Naive thymus-derived CD8-positive, alpha-beta T cell (primary cell): ENCODE measurements at regions of chr6 and their contacts with region 1.

Region 1: DNA sequence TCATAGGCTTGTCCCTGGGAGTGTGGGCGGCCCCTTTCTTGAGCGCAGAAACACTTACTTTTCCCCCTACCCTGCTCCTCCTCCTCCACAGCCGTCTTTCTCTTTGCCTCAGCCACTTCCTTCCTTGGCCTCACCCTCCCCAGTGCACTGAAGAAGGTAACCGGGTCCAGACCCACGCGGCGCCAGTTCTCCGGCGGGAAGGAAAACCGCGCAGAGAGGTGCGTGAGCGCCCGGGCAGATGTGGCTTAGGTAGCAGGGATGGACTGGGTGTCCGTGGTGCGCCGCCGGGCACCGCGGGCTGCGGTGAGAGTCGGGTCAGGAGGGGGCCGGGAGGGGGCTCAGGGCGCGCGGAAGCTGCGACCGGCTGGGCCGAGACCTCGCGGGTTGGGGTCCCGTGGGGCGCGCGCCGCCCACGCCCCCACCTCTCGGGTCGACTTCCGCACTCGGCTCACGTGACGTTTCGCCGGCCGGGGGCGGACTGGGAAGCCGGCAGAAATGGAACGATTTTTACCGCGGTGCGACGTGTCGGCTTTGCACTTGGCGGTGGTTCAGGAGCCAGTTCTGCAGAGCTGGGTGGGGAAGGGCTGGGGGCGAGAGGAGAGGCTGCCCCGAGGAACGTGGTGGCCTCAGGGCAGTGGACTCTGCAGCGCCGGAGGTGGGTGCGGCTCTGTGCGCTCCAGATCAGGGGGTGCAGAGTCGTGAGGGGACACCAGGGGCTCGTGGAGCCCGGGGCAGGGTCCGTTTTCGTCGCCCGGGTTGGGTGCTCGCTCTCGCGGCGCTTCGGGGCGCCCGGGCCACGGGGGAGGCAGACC is at the start of gene ABRACL:
- DNase-seq: peak; percentile 54 to 88 (median 74)
- ATAC-seq: peak; percentile 83 to 89
- H3K4me3 Mint-ChIP-seq: peak within 1 kb of the TSS in 7 of 10 donors; percentile 87 to 97 (median 93)
- H3K27ac Mint-ChIP-seq: peak within 1 kb of the TSS; percentile 88 to 97 (median 96)
- H3K4me1 Mint-ChIP-seq: peaks cover 16 to 33% (median 20%) of the 10 kb centered on the region in 4 donors
- H3K27me3 Mint-ChIP-seq: no peaks in the 10 kb centered on the region
- polyA plus RNA-seq, gene ABRACL: 210 to 228 (median 217) TPM

Region 2: DNA sequence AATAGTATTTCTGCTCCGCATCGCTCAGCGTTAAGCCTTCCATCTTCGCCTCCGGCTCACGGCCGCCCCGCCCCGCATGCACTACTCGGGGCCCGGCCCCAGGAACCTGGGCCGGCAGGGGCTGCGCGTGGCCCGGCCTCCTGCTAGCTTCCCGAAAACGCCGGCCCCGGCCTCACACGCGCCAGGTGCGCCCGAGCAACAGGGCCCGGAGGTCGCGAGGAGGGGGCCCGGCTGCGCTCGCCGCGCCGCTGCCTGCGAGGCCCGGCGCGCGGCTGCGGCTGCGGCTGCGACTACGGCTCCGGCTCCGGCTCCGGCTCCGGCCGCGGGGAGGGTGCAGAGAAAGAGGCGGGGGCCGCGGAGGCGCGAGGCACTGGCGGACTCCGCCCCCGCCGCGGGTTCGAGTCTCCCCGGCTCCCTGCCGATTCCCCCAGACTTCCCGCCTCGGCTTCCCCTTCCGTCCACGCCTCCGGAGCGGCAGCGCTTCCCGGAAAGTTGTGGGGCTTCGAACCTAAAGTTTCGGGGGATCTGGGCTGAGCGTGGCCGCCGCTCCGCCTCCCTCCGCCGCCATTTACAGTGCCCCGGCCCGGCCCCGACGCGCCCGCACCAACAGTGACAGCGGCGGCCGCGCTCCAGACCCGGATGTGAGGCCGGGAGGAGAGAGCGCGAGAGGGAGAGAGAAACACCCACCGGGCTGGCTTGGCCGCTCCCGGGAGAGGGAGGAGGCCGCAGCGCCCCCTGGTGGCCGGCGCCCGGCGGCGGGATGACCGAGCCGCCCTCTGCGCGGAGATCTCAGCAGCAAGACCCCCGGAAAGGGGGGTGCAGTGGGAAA is 41.0 kb before region 1 on chr6 and contains the start of gene REPS1:
- POLR2A ChIA-PET with region 1: interaction called, 41 read pairs
- DNase-seq: peak; percentile 85 to 96 (median 92)
- ATAC-seq: peak; percentile 84 to 87
- H3K4me3 Mint-ChIP-seq: peak within 1 kb of the TSS in 9 of 10 donors; percentile 87 to 96 (median 91)
- H3K27ac Mint-ChIP-seq: peak within 1 kb of the TSS in 9 of 10 donors; percentile 61 to 96 (median 93)
- H3K4me1 Mint-ChIP-seq: peaks cover 8 to 23% (median 15%) of the 10 kb centered on the region in 4 donors
- H3K27me3 Mint-ChIP-seq: no peaks in the 10 kb centered on the region
- polyA plus RNA-seq, gene REPS1: 19.4 to 45.3 (median 28.4) TPM

Region 3: DNA sequence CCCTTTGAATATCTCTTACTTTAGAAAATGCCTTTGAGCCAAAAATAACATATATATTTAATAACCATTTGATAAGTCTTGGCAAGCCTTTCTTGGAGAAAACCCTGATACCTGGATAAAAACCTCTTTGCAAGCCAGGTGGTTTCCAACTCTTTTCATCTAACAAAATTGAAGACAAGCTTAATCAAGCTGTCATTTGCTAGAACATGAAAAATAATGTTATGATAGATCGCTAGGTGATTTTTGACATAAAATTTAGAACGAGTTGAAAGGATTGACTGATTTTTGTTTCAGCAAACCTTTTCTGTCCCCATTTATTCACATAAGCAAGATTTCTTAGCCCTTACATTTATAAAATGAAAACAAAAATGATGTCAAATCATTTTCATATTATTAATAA is 44.3 kb after region 1 on chr6:
- POLR2A ChIA-PET with region 1: no interaction called
- DNase-seq: no peak
- ATAC-seq: no peak
- H3K4me3 Mint-ChIP-seq: no peak overlapping the region
- H3K27ac Mint-ChIP-seq: no peak overlapping the region
- H3K4me1 Mint-ChIP-seq: peaks cover 0 to 11% (median 5%) of the 10 kb centered on the region in 4 donors
- H3K27me3 Mint-ChIP-seq: no peaks in the 10 kb centered on the region

Region 4: GRCh38 chr6:139109558-139109957 is 80.7 kb after region 1 on chr6:
- POLR2A ChIA-PET with region 1: interaction called, 34 read pairs
- DNase-seq: peak in 4 of 10 donors; percentile 19 to 38 (median 34)
- ATAC-seq: no peak
- H3K4me3 Mint-ChIP-seq: peak overlapping the region in 2 of 10 donors; percentile 22 to 30
- H3K27ac Mint-ChIP-seq: peak overlapping the region in 8 of 10 donors; percentile 60 to 96 (median 81)
- H3K4me1 Mint-ChIP-seq: peaks cover 21 to 71% (median 55%) of the 10 kb centered on the region in 4 donors
- H3K27me3 Mint-ChIP-seq: no peaks in the 10 kb centered on the region